ENCODE measurements at regions of chr2 and their contacts with region 1.

Region 1: DNA sequence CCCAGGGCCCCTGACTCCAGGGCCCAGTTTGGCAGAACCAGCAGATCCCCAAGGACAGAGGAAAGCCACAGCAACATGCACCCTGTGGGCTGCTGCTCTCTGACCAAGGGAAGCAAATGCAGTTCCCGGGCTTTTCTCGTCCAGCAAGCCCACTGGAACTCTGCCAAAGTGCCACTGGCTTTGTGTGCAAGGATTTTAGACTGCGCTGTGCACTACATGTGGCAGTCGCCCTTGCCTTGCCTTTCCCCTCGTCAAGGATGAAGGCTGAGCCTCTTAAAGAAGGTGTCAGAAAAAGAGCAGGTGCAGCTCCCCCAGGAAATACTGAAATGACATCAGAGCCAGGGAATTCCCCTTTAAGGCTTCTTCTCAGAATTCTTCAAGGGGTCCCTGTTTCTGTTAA is 199.2 kb downstream of the TFCP2L1 start:
- DNase-seq: no peak
- H3K4me3 Mint-ChIP-seq: no peak overlapping the region
- H3K27ac Mint-ChIP-seq: no peak overlapping the region
- H3K4me1 Mint-ChIP-seq: no peaks in the 10 kb centered on the region
- H3K27me3 Mint-ChIP-seq: peaks cover 5% of the 10 kb centered on the region

Region 2: DNA sequence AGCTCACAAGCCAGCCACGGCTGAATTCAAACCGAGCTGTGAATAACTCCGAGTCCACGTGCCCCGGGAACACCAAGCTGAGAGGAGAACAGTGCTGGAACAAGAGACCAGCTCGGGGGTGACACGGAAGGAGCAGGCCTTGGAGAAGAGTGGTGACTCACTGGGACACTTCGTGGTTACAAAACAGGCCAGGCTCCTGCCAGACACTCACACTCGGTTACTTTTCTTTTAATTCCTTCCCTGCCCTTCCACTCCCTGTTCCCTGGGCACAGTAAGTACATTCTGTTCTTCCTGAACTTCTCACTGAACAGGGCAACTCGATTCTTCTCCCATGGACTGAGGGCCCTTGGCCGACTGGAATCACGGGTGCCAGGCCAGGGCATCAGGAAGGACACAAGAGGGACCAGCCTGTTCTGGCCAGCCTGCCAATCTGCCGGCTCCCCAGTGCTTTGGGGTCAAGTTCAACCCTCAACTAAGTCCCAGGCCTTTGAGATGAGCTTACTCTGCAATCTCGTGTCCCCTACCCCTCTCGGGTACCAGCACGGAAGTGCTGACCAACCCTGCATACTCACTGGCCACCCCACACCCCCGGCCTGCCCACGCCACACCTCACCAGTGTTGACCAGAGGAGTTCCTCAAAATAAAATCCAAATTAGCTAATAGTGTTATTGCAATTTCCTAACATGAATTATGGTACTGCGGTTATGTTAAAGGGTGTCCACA is 111.7 kb after region 1 on chr2:
- CTCF ChIA-PET with region 1: no interaction called
- intact Hi-C with region 1: no loop called
- DNase-seq: no peak
- H3K4me3 Mint-ChIP-seq: no peak overlapping the region
- H3K27ac Mint-ChIP-seq: no peak overlapping the region
- H3K4me1 Mint-ChIP-seq: no peaks in the 10 kb centered on the region
- H3K27me3 Mint-ChIP-seq: no peaks in the 10 kb centered on the region

Region 3: GRCh38 chr2:121356058-121356640 is 270.3 kb after region 1 on chr2:
- CTCF ChIA-PET with region 1: interaction called, 7 read pairs
- intact Hi-C with region 1: loop called (anchors 1 kb)
- DNase-seq: peak; percentile 49
- H3K4me3 Mint-ChIP-seq: no peak overlapping the region
- H3K27ac Mint-ChIP-seq: no peak overlapping the region
- H3K4me1 Mint-ChIP-seq: no peaks in the 10 kb centered on the region
- H3K27me3 Mint-ChIP-seq: no peaks in the 10 kb centered on the region

Measured in activated naive CD4-positive, alpha-beta T cell treated with anti-CD3 and anti-CD28 coated beads for 36 hours (primary cell).